ENCODE measurements at regions of chr19 and their contacts with region 1.

Region 1: DNA sequence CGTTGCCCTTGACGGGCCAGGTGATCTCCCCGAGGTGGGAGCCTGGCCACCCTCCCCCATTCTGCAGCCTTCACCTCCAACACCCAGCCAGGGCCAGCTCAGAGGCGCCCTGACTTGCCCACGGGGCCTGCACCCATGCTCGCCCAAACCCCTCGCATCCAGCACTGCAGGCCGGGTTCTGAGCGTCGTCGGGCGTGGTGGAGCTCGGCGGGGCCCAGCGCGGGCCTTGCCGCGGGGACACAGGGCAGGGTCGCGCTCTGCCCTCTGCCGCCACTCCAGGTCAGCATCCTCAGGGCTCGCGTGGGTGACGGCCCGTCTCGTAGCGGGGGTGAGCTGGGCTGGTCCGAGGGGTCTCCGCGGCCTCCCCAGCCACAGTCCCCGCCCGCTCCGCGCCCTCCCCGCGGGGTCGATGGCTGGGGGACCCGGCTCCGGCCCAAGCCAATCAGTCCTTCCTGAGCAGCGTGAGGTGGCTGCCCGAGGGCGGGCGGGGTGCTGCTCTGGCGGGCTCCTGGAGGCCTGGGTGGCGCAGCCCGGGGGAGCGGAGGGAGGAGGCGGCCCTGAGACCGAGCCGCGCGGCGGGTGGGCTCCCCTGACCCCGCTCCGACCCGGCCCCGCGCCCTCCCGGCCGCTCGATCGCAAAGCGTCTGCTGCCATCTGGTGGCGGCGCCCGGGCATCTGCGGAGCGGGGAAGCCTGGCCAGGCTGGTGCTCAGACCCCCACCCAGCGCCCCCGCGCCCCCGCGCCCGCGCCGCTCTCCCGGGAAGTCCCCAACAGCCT is 61.4 kb downstream of the CCNE1 start:
- DNase-seq: peak; percentile 11 to 63 (median 52)
- ATAC-seq: peak; percentile 53
- H3K4me3 ChIP-seq: peak overlapping the region in 1 of 2 donors; percentile 37
- H3K27ac ChIP-seq: no peak overlapping the region
- H3K4me1 ChIP-seq: peaks cover 11% of the 10 kb centered on the region
- H3K27me3 ChIP-seq: peaks cover 3 to 11% of the 10 kb centered on the region in 2 donors
- CTCF ChIP-seq: peak; percentile 49 to 86 (median 68)
- POLR2A ChIP-seq: no peak

Region 2: GRCh38 chr19:29735800-29736199 is 137.4 kb before region 1 on chr19:
- intact Hi-C with region 1: loop called (anchors 10 kb)
- DNase-seq: no peak
- ATAC-seq: no peak
- H3K4me3 ChIP-seq: no peak overlapping the region
- H3K27ac ChIP-seq: no peak overlapping the region
- H3K4me1 ChIP-seq: no peaks in the 10 kb centered on the region
- H3K27me3 ChIP-seq: no peaks in the 10 kb centered on the region
- CTCF ChIP-seq: no peak
- POLR2A ChIP-seq: no peak

Region 3: DNA sequence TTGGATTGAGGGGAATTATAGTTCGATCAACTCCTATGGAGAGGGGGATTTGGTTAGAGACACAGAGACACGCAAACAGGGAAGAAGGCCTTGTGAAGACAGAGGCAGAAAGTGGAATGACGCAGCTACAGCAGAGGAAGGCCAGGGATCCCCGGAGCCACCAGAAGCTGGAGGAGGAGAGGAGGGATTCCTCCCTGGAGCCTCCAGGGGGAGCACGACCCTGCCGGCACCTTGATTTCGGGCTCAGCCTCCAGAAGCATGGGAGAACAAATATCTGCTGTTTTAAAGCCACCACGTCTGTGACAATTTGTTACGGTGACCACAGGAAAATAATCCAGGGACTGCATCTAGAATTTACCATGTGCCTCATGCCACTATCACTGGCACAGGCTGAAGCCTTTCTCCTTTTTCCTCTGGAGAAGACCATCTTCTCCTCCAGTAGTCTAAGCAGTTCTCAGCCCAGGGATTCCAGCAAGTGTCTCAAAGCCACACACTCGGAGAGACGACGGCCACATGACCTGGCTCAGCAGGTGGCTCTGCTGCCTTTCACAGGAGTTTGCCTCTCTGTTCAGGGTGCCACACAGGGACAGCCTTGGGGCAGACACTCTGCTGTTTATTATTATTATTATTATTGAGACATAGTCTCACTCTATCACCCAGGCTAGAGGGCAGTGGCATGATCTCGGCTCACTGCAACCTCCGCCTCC is 101.4 kb before region 1 on chr19:
- intact Hi-C with region 1: loop called (anchors 5 kb)
- DNase-seq: peak; percentile 58 to 70 (median 62)
- ATAC-seq: peak; percentile 80
- H3K4me3 ChIP-seq: no peak overlapping the region
- H3K27ac ChIP-seq: no peak overlapping the region
- H3K4me1 ChIP-seq: peaks cover 5% of the 10 kb centered on the region
- H3K27me3 ChIP-seq: no peaks in the 10 kb centered on the region
- CTCF ChIP-seq: peak; percentile 66 to 79 (median 73)
- POLR2A ChIP-seq: no peak

Measured in body of pancreas (tissue), 4 donors.